Posterior vena cava (tissue), 2 donors: ENCODE measurements at regions of chr11 and their contacts with region 1.

Region 1: DNA sequence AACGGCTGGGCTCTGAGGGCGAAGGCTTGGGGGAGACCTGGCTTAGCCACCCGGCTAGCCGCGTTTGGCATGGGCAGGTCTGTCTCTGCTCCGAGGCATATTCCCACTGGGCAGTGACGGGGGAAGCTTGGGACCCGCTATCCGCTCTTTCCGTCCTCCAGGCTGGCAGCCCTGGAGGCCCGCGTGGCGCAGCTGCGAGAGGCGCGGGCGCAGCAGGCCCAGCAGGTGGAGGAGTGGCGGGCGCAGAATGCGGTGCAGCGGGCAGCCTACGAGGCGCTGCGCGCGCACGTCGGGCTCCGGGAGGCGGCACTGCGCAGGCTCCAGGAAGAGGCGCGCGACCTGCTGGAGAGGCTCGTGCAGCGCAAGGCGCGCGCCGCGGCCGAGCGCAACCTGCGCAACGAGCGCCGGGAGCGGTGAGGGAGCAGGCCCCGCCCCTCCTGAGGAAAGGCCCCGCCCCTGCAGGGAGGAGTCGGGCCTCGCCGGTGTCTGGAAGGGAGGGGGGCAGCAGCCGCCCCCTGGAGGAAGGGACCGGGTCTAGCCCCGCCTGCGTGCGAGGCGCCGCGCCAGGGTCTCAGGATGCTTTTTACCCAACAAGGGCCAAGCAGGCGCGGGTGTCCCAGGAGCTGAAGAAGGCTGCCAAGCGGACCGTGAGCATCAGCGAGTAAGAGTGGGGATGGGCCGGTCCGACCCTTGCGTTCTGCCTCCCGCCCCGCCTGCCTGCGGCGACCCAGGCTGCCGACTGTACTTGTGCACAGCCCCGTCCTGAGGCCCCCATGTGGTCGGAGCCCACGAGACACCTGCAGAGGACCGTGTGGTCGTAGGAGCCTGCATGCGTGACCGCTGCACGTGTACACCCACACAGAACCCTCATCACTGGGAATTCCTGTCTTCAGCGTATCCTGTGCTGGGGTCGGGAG is 7.9 kb downstream of the ATG16L2 start:
- DNase-seq: peak; percentile 94

Region 2: DNA sequence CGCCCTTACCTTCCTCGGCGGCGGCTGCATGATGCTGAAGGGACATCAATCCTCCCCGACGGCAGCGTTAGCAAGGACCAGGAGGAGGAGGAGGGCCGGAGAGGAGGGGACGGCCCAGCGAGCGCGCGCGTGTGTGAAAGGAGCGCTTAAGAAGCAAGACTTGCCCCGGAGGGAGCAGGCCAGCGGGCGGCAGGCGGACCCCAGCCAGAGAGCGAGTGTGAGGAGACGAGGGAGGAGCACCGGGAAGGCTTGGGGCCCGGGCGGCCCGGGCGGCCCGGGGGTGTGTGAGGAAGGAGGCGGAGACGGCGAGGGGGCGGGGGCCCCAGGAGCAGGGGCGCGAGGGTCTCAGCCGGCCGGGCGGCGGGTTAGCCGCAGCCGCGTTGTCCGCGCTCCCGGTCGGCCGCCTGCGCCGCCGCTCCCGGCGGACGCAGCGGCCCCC is 319.7 kb after region 1 on chr11:
- intact Hi-C with region 1: loop called in 1 of 2 experiments (anchors 10 kb)
- DNase-seq: peak; percentile 93

Region 3: DNA sequence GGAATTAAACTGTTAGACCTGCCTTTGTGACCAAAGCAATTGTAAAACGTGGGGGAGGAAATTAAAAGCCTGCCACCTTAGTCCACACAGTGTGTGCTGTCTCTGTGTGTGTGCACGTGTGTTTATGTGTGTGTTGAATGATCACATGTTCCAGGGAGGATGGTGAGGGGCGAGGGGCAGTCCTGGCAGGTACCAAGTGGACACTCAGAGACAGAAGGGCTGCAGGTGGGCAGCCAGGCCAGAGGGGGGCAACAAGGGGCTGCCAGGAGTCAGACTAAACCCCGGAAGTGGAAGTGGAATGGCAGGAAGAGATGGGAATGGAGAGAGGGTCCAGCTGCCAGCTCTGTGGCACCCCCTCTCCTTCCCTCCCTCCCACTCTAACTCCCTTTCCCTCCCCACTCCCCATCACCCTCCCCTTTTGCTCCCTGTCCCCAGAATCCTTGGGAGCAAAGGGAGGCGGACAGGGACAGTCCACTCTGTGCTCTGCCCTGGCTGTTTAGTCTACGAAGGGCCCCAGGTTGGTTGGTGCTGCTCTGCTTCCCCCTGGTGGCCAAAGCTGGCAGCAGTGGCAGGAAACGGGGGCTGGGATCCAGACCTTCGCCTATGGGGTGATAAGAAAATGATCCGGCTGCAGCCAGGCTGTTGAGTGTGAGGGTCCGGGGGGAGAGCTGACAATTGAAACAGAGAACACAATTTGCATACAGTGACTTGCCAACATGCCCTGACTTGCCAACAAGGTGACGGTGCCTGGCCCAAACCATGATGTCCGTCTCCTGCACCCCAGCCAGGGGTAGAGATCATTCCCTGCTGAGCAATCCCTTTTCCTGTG is 420.3 kb after region 1 on chr11:
- intact Hi-C with region 1: loop called in 1 of 2 experiments (anchors 10 kb)
- DNase-seq: peak; percentile 88